Gastrocnemius medialis (tissue), 4 donors: ENCODE measurements at regions of chr2 and their contacts with region 1.

Region 1: DNA sequence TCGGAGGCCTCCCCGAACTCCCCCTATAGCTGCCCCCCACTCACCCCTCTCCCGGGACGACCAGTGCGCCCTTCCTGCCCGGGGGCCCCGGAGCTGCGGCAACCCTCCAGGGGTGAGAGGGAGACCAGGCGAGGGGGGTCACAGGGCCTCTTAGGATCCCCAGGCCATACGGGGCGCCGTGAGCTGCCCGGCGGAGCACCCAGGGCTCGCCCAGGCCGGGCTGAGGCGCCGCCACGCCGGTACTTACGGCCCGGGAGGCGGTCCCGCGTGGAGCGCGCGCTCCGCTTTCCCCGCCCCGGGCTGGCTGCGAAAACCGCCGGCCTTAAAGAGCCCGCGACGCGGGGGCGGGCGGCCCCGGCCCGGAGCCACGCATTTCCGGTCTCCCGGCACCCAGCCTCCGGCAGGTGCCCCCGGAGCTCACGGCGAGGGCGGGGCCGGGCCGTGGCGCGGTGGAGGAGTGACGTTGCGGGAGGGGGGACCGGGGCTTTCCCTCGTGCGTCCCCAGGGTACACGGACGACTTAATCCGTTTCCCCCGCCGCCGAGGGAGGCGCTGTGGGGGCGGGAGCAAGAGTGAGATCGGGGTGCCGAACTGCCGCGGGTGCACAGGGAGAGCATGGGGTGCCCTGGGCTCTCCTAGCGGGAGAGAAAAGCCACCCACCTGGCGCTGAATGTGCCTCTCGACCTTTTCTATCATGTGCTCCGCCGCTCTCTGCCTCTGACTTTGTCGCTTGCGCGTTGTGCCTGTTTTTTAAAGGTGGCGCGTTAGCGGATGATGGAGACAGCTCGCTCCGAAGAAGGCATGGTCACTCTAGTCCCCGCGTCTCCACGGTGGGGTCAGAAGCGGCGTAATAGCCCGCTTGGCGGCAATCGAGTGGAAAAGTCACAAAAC is at the start of gene METTL21A:
- DNase-seq: peak; percentile 78 to 88
- ATAC-seq: peak; percentile 79 to 81
- H3K4me3 ChIP-seq: peak within 1 kb of the TSS; percentile 74 to 91 (median 86)
- H3K27ac ChIP-seq: peak within 1 kb of the TSS; percentile 91 to 96 (median 93)
- H3K4me1 ChIP-seq: peaks cover 7 to 11% of the 10 kb centered on the region in 2 donors
- H3K27me3 ChIP-seq: no peaks in the 10 kb centered on the region
- CTCF ChIP-seq: peak in 3 of 5 experiments; percentile 33 to 51 (median 48)
- POLR2A ChIP-seq: peak; percentile 73 to 89
- total RNA-seq, gene METTL21A: 9.1 to 20.8 (median 13.9) TPM

Region 2: DNA sequence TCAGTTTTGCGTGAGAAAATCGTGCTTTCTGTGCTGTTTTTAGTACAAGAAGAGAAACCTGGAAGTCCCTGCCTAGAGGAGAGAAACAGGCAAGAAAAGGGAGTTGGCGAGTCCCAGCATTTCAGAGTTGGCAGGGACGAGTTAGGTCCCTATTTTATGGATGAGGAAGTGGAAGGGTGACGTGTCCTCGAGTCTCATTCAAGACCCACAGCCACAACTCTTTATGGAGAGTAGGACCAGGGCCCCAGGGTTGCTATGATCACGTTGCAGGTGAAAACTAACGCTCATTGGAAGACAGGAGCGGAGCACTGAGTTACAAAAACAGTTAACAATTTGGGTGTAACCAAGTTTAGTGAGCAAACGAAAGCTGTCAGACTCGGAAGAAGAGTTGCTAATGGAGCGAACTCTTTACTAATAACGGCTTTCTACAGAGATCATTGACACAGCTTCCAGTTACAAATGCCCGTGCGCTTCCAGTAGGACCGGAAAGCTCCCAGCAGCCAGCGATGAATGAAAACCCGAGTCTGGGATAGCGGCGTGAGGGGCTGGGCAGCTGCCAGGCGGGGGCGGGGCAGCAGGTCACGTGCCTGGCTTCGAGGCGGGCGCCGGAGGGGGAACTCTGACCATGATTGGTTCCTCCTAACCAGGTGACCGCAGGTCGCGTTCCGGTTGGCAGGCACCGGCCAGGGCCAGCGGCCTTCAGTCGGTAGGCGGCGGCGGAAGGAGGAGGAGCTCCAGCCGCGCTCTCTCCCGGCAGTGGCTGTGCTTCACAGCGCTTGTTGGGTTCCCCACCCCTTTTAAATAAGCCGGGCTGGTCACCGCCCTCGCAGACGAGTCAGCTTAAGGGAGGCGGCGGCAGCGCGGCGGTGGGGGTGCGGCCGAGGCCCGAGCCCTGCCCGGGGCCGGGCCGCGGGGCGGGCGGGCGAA is 85.8 kb after region 1 on chr2 and contains the start of gene CCNYL1:
- in situ Hi-C with region 1: loop called in 2 of 4 experiments (anchors 10 kb)
- intact Hi-C with region 1: loop called (anchors 1 kb)
- DNase-seq: peak; percentile 99
- ATAC-seq: peak; percentile 96 to 97
- H3K4me3 ChIP-seq: peak within 1 kb of the TSS; percentile 79 to 95 (median 89)
- H3K27ac ChIP-seq: peak within 1 kb of the TSS; percentile 76 to 88 (median 80)
- H3K4me1 ChIP-seq: peaks cover 18 to 19% of the 10 kb centered on the region in 2 donors
- H3K27me3 ChIP-seq: no peaks in the 10 kb centered on the region
- CTCF ChIP-seq: peak in 4 of 5 experiments; percentile 26 to 52 (median 45)
- POLR2A ChIP-seq: peak; percentile 87 to 98
- total RNA-seq, gene CCNYL1: 3.3 to 10.1 (median 7.1) TPM

Region 3: GRCh38 chr2:208025037-208025813 is 400.0 kb after region 1 on chr2 and contains the start of gene PLEKHM3:
- in situ Hi-C with region 1: loop called in 2 of 4 experiments (anchors 25 kb)
- intact Hi-C with region 1: loop called (anchors 5 kb)
- DNase-seq: peak; percentile 73 to 82
- ATAC-seq: peak; percentile 96 to 99
- H3K4me3 ChIP-seq: peak within 1 kb of the TSS; percentile 83 to 91 (median 88)
- H3K27ac ChIP-seq: peak within 1 kb of the TSS; percentile 78 to 93 (median 88)
- H3K4me1 ChIP-seq: peaks cover 24 to 33% of the 10 kb centered on the region in 2 donors
- H3K27me3 ChIP-seq: no peaks in the 10 kb centered on the region
- CTCF ChIP-seq: no peak
- POLR2A ChIP-seq: peak; percentile 48 to 76
- total RNA-seq, gene PLEKHM3: 5.6 to 8.8 (median 6.8) TPM

Region 4: GRCh38 chr2:208265801-208266552 is 640.7 kb after region 1 on chr2 and contains the start of gene PIKFYVE:
- in situ Hi-C with region 1: loop called in 1 of 4 experiments (anchors 25 kb)
- intact Hi-C with region 1: loop called (anchors 2 kb)
- DNase-seq: peak; percentile 94 to 95
- ATAC-seq: peak; percentile 94 to 97
- H3K4me3 ChIP-seq: peak within 1 kb of the TSS; percentile 71 to 97 (median 96)
- H3K27ac ChIP-seq: peak within 1 kb of the TSS; percentile 91 to 100 (median 98)
- H3K4me1 ChIP-seq: peaks cover 33 to 39% of the 10 kb centered on the region in 2 donors
- H3K27me3 ChIP-seq: no peaks in the 10 kb centered on the region
- CTCF ChIP-seq: peak in 1 of 5 experiments; percentile 18
- POLR2A ChIP-seq: peak; percentile 83 to 88
- total RNA-seq, gene PIKFYVE: 14.0 to 23.9 (median 17.9) TPM